Heart left ventricle (tissue), 16 donors: ENCODE measurements at regions of chrX and their contacts with region 1.

Region 1: GRCh38 chrX:153667956-153668396 is 5.6 kb downstream of the PNCK start:
- DNase-seq: peak; percentile 76 to 91 (median 85)
- ATAC-seq: peak; percentile 74 to 92 (median 88)
- H3K4me3 ChIP-seq: no peak overlapping the region
- H3K27ac ChIP-seq: peak overlapping the region in 1 of 12 donors; percentile 73
- H3K4me1 ChIP-seq: no peaks in the 10 kb centered on the region
- H3K27me3 ChIP-seq: peaks cover 0 to 22% (median 3%) of the 10 kb centered on the region in 9 donors
- CTCF ChIP-seq: peak; percentile 51 to 76 (median 70)
- POLR2A ChIP-seq: no peak

Region 2: DNA sequence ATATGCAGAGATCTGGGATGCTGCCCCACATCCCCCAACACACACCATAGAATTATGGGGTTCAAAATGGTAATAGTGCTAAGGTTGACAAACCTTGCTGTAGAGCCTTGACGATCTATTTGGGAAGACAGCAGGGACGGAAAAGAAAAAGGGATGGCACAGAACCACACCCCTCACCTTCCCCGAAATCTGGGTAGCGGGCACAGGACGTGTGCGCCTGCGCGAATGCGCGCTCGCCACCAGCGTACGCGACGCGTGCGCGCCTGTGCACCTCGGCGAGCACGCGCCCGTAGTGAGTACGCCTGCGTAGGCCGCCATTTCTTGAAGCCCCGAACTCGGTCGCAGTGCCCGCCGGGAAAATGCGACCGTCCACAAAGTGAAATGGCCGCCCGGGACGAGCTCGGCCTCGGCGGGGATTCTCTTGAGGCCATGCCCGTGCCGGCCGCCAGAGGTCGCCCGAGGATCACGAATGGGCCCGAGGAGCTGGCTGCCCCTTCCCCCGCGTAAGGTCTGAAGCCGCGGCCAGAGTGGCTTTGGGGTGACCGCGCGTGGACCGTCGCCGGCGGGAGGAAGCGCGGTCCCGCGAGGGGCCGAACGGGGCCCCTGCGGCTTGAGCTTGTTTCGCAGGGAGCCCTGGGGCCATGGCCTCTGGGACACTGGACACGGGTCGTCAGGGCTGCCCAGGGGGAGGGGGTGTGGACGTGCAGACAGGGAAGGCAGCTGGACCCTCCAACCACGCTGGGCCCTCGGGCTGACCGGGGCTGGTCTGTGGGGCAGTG is 726.5 kb before region 1 on chrX:
- intact Hi-C with region 1: loop called in 3 of 10 experiments (anchors 5 to 10 kb)
- DNase-seq: peak; percentile 89 to 94 (median 93)
- ATAC-seq: peak; percentile 93 to 98 (median 94)
- H3K4me3 ChIP-seq: peak overlapping the region; percentile 16 to 71 (median 60)
- H3K27ac ChIP-seq: peak overlapping the region; percentile 5 to 86 (median 80)
- H3K4me1 ChIP-seq: peaks cover 0 to 12% (median 3%) of the 10 kb centered on the region in 12 donors
- H3K27me3 ChIP-seq: peaks cover 0 to 7% (median 0%) of the 10 kb centered on the region in 9 donors
- CTCF ChIP-seq: peak; percentile 63 to 87 (median 80)
- POLR2A ChIP-seq: peak in 1 of 2 donors; percentile 51

Region 3: GRCh38 chrX:153032397-153033118 is 635.4 kb before region 1 on chrX:
- intact Hi-C with region 1: loop called in 1 of 10 experiments (anchors 10 kb)
- DNase-seq: peak; percentile 57 to 87 (median 64)
- ATAC-seq: peak in 3 of 4 donors; percentile 78 to 92 (median 90)
- H3K4me3 ChIP-seq: peak overlapping the region in 11 of 12 donors; percentile 3 to 49 (median 40)
- H3K27ac ChIP-seq: peak overlapping the region in 1 of 12 donors; percentile 38
- H3K4me1 ChIP-seq: peaks cover 0 to 4% (median 0%) of the 10 kb centered on the region in 12 donors
- H3K27me3 ChIP-seq: no peaks in the 10 kb centered on the region
- CTCF ChIP-seq: peak; percentile 72 to 90 (median 78)
- POLR2A ChIP-seq: no peak

Region 4: DNA sequence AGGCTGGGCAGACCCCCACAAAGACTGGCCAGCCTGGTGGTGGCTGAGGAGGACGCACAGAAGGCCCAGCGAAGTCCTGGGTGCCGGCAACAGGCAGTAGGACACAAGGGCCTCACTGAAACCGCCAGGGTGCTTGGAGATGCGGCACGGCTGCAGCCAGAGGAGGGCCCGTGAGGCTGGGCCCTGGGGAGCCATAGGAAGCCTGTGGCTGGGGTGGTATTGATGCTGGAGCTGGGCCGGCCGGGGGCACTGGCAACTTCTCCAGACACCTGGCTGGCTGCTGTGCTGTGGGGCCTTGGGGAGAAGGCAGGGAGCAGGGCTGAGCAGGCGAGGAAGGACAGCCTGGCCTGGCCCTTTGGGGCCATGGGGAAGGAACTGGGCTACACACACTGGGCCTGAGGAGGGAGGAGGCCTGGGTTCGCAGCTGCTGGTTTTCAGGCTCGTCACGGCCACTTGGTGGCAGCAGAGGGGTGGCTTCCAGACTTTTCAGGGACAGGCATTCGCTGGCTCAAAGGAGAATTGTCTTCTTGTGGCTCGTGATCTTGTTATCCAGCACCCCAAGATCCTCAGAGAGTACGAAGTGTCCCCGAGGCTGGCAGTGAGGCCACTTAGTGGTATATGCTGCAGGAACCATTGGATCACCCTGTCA is 113.3 kb before region 1 on chrX:
- intact Hi-C with region 1: loop called (anchors 2 to 5 kb)
- DNase-seq: peak; percentile 44 to 81 (median 54)
- ATAC-seq: peak; percentile 42 to 80 (median 66)
- H3K4me3 ChIP-seq: no peak overlapping the region
- H3K27ac ChIP-seq: no peak overlapping the region
- H3K4me1 ChIP-seq: no peaks in the 10 kb centered on the region
- H3K27me3 ChIP-seq: peaks cover 0 to 14% (median 0%) of the 10 kb centered on the region in 9 donors
- CTCF ChIP-seq: peak; percentile 46 to 73 (median 62)
- POLR2A ChIP-seq: no peak

Region 5: DNA sequence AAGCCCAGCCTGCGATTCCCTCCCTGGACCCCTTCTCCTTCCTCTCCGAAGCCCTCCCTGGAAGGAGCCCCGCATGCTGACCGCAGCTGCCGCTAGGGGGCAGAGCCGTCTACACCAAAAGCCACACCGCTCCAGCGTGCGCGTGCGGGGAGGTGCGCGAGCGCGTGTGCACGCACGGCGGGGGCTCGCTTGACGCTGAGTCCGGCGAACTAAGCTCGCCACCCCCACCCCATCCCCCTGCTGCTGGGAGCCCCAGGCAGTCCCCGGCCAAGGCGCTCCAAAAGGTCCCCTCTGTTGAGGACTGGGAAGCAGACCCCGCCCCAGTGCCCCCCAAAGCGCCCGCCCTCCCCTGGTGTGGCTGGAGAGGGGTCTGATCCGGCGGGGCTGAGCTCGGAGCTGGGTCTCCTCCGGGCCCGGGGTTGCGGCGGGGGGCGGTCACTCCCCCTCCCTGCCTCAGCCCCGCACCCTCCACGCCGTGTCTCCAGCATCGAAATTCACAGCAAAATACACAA is 58.0 kb before region 1 on chrX:
- intact Hi-C with region 1: loop called (anchors 2 to 10 kb)
- DNase-seq: peak; percentile 68 to 88 (median 71)
- ATAC-seq: peak; percentile 82 to 95 (median 92)
- H3K4me3 ChIP-seq: peak overlapping the region in 11 of 12 donors; percentile 7 to 51 (median 45)
- H3K27ac ChIP-seq: no peak overlapping the region
- H3K4me1 ChIP-seq: peaks cover 0 to 11% (median 4%) of the 10 kb centered on the region in 12 donors
- H3K27me3 ChIP-seq: peaks cover 0 to 50% (median 0%) of the 10 kb centered on the region in 9 donors
- CTCF ChIP-seq: peak; percentile 63 to 82 (median 72)
- POLR2A ChIP-seq: no peak